ENCODE measurements at regions of chr12 and their contacts with region 1.

Region 1: DNA sequence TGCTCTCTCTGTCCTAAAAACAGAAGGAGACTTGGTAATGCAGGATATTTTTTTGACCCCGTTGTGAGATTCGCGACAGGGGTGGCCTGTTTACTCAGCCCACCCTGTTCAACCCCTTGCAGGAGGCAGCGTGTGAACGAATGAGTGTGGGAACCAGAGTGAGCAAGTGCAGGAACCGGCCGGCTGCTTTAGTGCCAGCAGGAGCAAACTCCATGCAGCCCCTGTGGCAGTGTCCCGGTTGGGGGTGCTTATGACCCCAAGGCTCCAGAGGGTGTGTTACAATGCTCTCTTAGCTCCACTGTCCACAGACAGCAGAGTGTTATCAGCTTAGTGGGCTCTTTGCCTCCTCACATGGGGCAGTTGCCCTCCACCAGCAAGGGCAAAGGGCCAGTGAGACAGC is 225.2 kb downstream of the ETNK1 start:
- DNase-seq: no peak
- H3K4me3 ChIP-seq: no peak overlapping the region
- H3K27ac ChIP-seq: no peak overlapping the region
- H3K4me1 ChIP-seq: no peaks in the 10 kb centered on the region
- H3K27me3 ChIP-seq: no peaks in the 10 kb centered on the region
- CTCF ChIP-seq: no peak
- POLR2A ChIP-seq: no peak

Region 2: DNA sequence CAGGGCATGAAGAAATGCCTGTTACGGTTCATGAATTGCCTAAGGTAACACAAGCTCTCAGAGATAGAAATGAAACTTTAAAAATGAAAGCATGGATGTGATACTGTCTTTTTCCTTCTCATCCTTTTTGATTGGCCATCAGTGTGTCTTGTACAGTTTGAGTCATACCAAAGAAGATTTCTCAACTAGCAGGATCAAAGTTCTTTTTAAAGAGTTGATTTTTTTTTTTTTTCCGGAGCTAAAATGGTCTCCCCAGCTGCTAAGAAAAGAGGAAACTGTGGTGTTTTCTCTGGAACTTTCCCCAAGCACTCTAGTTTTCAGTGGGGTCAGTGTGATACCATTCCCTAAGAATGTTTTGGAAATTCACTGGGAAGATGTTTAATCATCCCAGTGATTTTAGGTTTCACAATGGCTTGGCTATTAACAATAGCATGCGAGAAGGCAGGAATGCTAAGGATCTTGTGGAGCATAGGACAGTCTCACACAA is 120.2 kb before region 1 on chr12:
- intact Hi-C with region 1: loop called (anchors 10 kb)
- DNase-seq: no peak
- H3K4me3 ChIP-seq: no peak overlapping the region
- H3K27ac ChIP-seq: peak overlapping the region in 1 of 2 donors; percentile 29
- H3K4me1 ChIP-seq: no peaks in the 10 kb centered on the region
- H3K27me3 ChIP-seq: no peaks in the 10 kb centered on the region
- CTCF ChIP-seq: no peak
- POLR2A ChIP-seq: no peak

Region 3: GRCh38 chr12:23204933-23205778 is 355.0 kb after region 1 on chr12:
- intact Hi-C with region 1: loop called (anchors 10 kb)
- DNase-seq: no peak
- H3K4me3 ChIP-seq: no peak overlapping the region
- H3K27ac ChIP-seq: no peak overlapping the region
- H3K4me1 ChIP-seq: no peaks in the 10 kb centered on the region
- H3K27me3 ChIP-seq: no peaks in the 10 kb centered on the region
- CTCF ChIP-seq: peak; percentile 74 to 95 (median 86)
- POLR2A ChIP-seq: no peak

Measured in prostate gland (tissue), 2 donors.